ENCODE measurements at regions of chr19 and their contacts with region 1.

Region 1: DNA sequence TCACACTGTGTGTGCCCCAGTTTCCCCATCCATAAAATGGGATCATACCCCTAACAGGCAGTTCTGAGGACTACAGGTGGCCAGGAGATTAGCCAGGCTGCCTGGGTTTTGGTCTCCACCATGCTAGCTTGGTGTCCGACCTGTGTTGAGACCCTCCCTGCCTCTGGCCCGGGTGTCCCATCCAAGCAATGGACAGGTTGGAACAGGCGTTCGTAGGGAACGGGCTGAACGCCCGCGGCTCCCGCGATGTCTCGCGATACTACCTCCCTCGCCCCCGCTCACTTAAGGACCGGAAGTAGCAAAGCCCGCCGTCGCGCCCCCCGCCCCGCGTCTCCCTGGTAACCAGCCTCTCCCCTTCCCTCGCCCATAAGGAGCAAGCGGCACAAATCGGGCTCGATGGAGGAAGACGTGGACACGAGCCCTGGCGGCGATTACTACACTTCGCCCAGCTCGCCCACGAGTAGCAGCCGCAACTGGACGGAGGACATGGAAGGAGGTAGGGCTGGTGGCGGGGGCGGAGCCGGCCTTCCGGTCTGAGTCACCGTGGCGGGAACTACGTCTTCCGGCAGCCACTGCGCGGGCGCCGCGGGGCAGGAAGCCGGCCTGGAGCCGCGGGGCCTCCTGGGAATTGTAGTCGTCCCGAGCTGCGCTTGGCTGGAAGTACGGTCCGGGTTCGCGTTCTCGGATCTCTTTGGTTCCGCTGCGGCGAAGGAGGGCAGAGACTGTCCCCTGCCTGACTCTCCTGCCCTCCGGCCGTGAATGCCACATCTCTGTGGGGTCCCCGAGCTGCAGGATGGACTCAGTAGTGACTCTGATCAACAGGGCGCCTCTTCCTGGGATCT is 45.4 kb downstream of the SMIM24 start:
- DNase-seq: peak; percentile 90 to 98 (median 95)
- ATAC-seq: peak; percentile 95
- H3K4me3 ChIP-seq: peak overlapping the region; percentile 72 to 93
- H3K4me3 Mint-ChIP-seq: peak overlapping the region; percentile 97
- H3K27ac ChIP-seq: peak overlapping the region; percentile 66 to 98
- H3K27ac Mint-ChIP-seq: peak overlapping the region; percentile 97
- H3K4me1 ChIP-seq: peaks cover 9% of the 10 kb centered on the region
- H3K4me1 Mint-ChIP-seq: peaks cover 14% of the 10 kb centered on the region
- H3K27me3 ChIP-seq: no peaks in the 10 kb centered on the region
- H3K27me3 Mint-ChIP-seq: no peaks in the 10 kb centered on the region
- CTCF ChIP-seq: no peak

Region 2: GRCh38 chr19:3275583-3276340 is 159.2 kb before region 1 on chr19:
- CTCF ChIA-PET with region 1: interaction called, 4 read pairs
- POLR2A ChIA-PET with region 1: interaction called, 4 read pairs
- intact Hi-C with region 1: loop called (anchors 1 kb)
- DNase-seq: peak; percentile 84 to 98 (median 93)
- ATAC-seq: peak; percentile 79
- H3K4me3 ChIP-seq: peak overlapping the region; percentile 59 to 84
- H3K4me3 Mint-ChIP-seq: peak overlapping the region; percentile 86
- H3K27ac ChIP-seq: peak overlapping the region; percentile 34 to 63
- H3K27ac Mint-ChIP-seq: peak overlapping the region; percentile 70
- H3K4me1 ChIP-seq: peaks cover 18% of the 10 kb centered on the region
- H3K4me1 Mint-ChIP-seq: peaks cover 17% of the 10 kb centered on the region
- H3K27me3 ChIP-seq: peaks cover 0 to 2% of the 10 kb centered on the region in 2 experiments
- H3K27me3 Mint-ChIP-seq: peaks cover 6% of the 10 kb centered on the region
- CTCF ChIP-seq: peak; percentile 14

Region 3: GRCh38 chr19:3336680-3337523 is 98.0 kb before region 1 on chr19:
- CTCF ChIA-PET with region 1: interaction called, 26 read pairs
- POLR2A ChIA-PET with region 1: interaction called, 6 read pairs
- intact Hi-C with region 1: loop called (anchors 1 kb)
- DNase-seq: no peak
- ATAC-seq: no peak
- H3K4me3 ChIP-seq: no peak overlapping the region
- H3K4me3 Mint-ChIP-seq: no peak overlapping the region
- H3K27ac ChIP-seq: no peak overlapping the region
- H3K27ac Mint-ChIP-seq: no peak overlapping the region
- H3K4me1 ChIP-seq: peaks cover 12% of the 10 kb centered on the region
- H3K4me1 Mint-ChIP-seq: peaks cover 11% of the 10 kb centered on the region
- H3K27me3 ChIP-seq: peaks cover 0 to 3% of the 10 kb centered on the region in 2 experiments
- H3K27me3 Mint-ChIP-seq: no peaks in the 10 kb centered on the region
- CTCF ChIP-seq: no peak

Region 4: GRCh38 chr19:3479177-3479833 is 44.4 kb after region 1 on chr19:
- CTCF ChIA-PET with region 1: interaction called, 9 read pairs
- POLR2A ChIA-PET with region 1: no interaction called
- intact Hi-C with region 1: loop called in 1 of 2 experiments (anchors 2 kb)
- DNase-seq: peak in 8 of 9 experiments; percentile 24 to 81 (median 54)
- ATAC-seq: peak; percentile 84
- H3K4me3 ChIP-seq: peak overlapping the region; percentile 33 to 43
- H3K4me3 Mint-ChIP-seq: no peak overlapping the region
- H3K27ac ChIP-seq: no peak overlapping the region
- H3K27ac Mint-ChIP-seq: no peak overlapping the region
- H3K4me1 ChIP-seq: peaks cover 18% of the 10 kb centered on the region
- H3K4me1 Mint-ChIP-seq: peaks cover 10% of the 10 kb centered on the region
- H3K27me3 ChIP-seq: no peaks in the 10 kb centered on the region
- H3K27me3 Mint-ChIP-seq: no peaks in the 10 kb centered on the region
- CTCF ChIP-seq: no peak

Region 5: DNA sequence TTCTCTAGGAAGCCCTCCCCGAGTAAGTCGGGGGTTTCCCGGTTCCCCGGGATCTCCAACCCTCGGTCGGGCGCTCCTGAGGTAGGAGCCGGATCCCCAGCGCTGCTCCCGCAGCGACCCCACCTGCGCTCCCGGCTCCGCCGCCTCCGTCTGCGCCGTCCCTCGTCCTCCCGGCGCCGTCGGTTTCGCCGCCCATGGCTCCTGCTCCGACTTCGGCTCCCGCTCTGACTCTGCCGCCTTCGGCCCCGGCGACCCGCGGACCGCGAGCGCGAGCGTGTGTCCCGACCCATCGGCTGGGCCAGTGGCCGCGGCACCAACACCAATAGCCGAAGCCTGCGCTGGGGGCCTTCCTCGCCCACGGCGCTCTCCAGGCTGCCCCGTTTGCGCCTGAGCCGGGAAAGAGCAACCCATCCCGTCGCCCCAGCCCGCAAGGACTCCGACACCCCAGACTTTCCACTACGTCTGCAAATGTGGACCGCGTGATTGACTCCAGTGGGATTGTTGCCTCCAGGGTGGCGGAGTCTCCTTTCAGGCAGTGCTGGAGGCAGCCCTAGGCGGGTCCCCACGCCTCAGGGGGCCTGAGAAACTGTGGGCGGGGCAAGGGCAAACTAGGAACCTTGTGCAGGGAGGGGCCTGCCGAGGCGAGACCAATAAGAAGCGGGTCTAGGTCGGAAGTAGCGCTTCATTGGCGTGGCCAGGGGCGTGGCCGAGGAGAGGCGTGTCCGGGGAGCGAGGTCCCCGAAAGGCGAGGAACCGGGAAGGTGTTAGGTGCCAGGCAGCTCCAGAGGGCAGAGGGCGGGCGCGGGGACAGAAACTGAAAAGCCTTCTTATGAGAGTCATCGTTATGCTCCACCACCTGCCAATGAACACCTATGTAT is 191.8 kb after region 1 on chr19 and contains the start of gene CACTIN:
- CTCF ChIA-PET with region 1: no interaction called
- POLR2A ChIA-PET with region 1: no interaction called
- intact Hi-C with region 1: loop called in 1 of 2 experiments (anchors 1 kb)
- DNase-seq: peak; percentile 97 to 99 (median 99)
- ATAC-seq: peak; percentile 99
- H3K4me3 ChIP-seq: peak within 1 kb of the TSS; percentile 77 to 80
- H3K4me3 Mint-ChIP-seq: peak within 1 kb of the TSS; percentile 85
- H3K27ac ChIP-seq: peak within 1 kb of the TSS; percentile 74 to 99
- H3K27ac Mint-ChIP-seq: peak within 1 kb of the TSS; percentile 99
- H3K4me1 ChIP-seq: peaks cover 20% of the 10 kb centered on the region
- H3K4me1 Mint-ChIP-seq: peaks cover 26% of the 10 kb centered on the region
- H3K27me3 ChIP-seq: no peaks in the 10 kb centered on the region
- H3K27me3 Mint-ChIP-seq: no peaks in the 10 kb centered on the region
- CTCF ChIP-seq: no peak
- total RNA-seq, gene CACTIN: 32.5 to 33.0 TPM

Region 6: DNA sequence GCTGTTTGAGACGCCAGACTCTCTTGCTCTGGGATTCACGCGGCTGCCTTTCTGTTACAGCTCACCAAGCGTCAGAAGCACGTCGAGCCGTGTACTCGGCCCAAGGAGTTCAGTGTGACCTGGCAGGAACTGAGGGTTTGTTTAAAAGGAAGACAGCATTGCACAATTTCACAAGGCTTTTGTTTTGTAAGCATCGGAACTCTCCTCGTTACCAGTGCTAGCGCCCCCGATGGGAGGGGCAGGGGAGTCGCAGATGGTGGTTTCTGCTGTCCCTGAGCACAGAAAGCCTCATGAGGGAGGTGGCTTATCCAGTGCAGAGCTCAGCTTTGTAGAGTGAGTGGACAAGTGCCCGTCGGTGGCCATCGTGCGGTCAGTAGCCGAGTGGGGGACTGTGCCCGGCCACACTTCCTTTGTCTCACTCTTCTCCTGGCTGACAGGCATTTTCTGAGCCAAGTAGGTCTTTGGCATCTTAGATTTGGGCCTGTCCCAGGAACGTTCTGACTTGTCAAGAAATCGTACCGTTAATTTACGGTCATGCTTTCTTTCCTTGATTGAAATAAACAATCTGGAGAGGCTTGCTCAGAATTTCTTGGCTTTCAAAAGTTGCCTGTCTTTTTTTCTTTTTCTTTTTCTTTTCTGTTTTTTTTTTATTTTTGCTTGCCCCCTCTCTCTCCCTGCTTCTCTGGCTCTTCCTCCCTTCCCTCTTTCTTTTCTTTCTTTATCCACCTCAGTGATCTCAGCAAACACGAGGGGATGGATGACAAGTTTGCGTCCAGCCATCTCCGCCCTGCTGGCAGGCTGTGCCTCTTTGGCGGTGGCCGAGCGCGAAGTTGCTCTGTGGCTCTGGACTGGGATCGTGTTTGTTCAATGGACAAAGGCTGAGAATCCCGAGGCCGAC is 1541.7 kb after region 1 on chr19:
- CTCF ChIA-PET with region 1: no interaction called
- POLR2A ChIA-PET with region 1: no interaction called
- intact Hi-C with region 1: no loop called
- DNase-seq: peak in 2 of 9 experiments; percentile 45 to 49
- ATAC-seq: no peak
- H3K4me3 ChIP-seq: no peak overlapping the region
- H3K4me3 Mint-ChIP-seq: no peak overlapping the region
- H3K27ac ChIP-seq: no peak overlapping the region
- H3K27ac Mint-ChIP-seq: no peak overlapping the region
- H3K4me1 ChIP-seq: peaks cover 9% of the 10 kb centered on the region
- H3K4me1 Mint-ChIP-seq: peaks cover 31% of the 10 kb centered on the region
- H3K27me3 ChIP-seq: no peaks in the 10 kb centered on the region
- H3K27me3 Mint-ChIP-seq: no peaks in the 10 kb centered on the region
- CTCF ChIP-seq: no peak

Measured in CD8-positive, alpha-beta T cell (primary cell).